HepG2 (cell line): ENCODE measurements at regions of chr1 and their contacts with region 1.

Region 1: GRCh38 chr1:245894843-245895242 is 612.2 kb downstream of the SMYD3 start:
- DNase-seq: no peak
- ATAC-seq: no peak
- H3K4me3 ChIP-seq: no peak overlapping the region
- H3K27ac ChIP-seq: no peak overlapping the region
- H3K4me1 ChIP-seq: no peaks in the 10 kb centered on the region
- H3K27me3 ChIP-seq: no peaks in the 10 kb centered on the region
- CTCF ChIP-seq: no peak
- EP300 ChIP-seq: no peak
- POLR2A ChIP-seq: no peak
- RAD21 ChIP-seq: no peak

Region 2: DNA sequence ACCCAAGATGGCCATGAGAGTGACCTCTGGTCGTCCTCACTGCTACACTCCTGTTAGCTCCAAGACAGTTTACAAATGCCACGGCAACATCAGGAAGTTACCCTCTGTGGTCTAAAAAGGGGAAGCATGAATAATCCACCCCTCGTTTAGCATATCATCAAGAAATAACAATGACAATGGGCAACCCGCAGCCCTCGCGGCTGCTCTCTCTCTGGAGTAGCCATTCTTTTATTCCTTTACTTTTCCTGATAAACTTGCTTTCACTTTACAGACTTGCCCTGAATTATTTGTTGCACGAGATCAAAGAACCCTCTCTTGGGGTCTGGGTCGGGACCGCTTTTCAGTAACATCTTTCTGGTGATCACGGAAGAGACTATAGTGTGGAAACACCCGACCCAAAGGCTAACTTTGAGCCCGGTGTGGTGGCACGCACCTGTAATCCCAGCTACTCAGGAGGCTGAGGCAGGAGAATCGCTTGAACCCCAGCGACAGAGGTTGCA is 1079.2 kb before region 1 on chr1:
- CTCF ChIA-PET with region 1: no interaction called
- POLR2A ChIA-PET with region 1: no interaction called
- in situ Hi-C with region 1: no loop called
- intact Hi-C with region 1: no loop called
- DNase-seq: no peak
- ATAC-seq: no peak
- H3K4me3 ChIP-seq: no peak overlapping the region
- H3K27ac ChIP-seq: no peak overlapping the region
- H3K4me1 ChIP-seq: peaks cover 23% of the 10 kb centered on the region
- H3K27me3 ChIP-seq: no peaks in the 10 kb centered on the region
- CTCF ChIP-seq: no peak
- EP300 ChIP-seq: no peak
- POLR2A ChIP-seq: no peak
- RAD21 ChIP-seq: no peak

Region 3: GRCh38 chr1:245687594-245688535 is 207.0 kb before region 1 on chr1:
- CTCF ChIA-PET with region 1: no interaction called
- POLR2A ChIA-PET with region 1: no interaction called
- in situ Hi-C with region 1: no loop called
- intact Hi-C with region 1: no loop called
- DNase-seq: no peak
- ATAC-seq: peak; percentile 32; the same call in 2 of the 3 replicates
- H3K4me3 ChIP-seq: no peak overlapping the region
- H3K27ac ChIP-seq: no peak overlapping the region
- H3K4me1 ChIP-seq: no peaks in the 10 kb centered on the region
- H3K27me3 ChIP-seq: no peaks in the 10 kb centered on the region
- CTCF ChIP-seq: peak; percentile 39; the same call in 1 of the 2 replicates
- EP300 ChIP-seq: no peak
- POLR2A ChIP-seq: no peak
- RAD21 ChIP-seq: no peak

Region 4: GRCh38 chr1:245807306-245807705 is 87.5 kb before region 1 on chr1:
- CTCF ChIA-PET with region 1: no interaction called
- POLR2A ChIA-PET with region 1: no interaction called
- in situ Hi-C with region 1: no loop called
- intact Hi-C with region 1: no loop called
- DNase-seq: no peak
- ATAC-seq: no peak
- H3K4me3 ChIP-seq: no peak overlapping the region
- H3K27ac ChIP-seq: peak overlapping the region; percentile 12
- H3K4me1 ChIP-seq: peaks cover 62% of the 10 kb centered on the region
- H3K27me3 ChIP-seq: no peaks in the 10 kb centered on the region
- CTCF ChIP-seq: no peak
- EP300 ChIP-seq: no peak
- POLR2A ChIP-seq: no peak
- RAD21 ChIP-seq: no peak

Region 5: DNA sequence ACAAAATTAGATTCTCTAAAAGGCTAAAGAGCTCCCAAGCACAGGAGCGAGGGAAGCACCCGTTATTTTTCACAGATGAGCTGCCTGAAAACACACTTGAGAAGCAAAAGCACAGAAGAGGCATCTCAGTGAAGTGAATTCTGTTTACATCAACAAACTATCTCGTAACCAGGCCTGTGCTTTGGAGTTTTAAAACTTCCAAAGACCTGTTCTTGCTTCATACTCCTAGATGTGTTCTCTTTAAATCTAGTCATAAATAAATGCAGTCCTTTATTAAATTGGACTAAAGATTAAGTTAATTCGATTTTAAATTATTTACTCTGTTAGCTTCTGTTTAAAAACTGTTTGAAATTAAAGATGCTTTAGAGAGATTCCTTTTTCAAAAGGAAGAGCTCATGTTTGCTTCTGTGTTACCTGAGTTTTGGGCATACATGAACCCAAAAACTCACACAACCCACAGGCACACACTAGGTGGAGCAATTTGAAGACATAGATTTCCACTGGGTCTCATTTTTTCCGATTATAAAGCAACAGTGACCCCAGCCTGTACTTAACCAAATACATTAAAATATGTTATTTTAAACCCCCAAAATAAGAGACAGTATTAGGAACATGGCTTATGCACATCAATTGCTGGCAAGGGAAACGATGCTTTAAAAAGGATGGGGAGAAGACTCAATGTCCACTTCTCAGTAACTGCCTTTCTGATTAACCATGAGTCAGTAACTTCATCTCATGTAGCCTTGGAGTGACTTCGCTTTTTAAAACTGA is 35.9 kb before region 1 on chr1:
- CTCF ChIA-PET with region 1: no interaction called
- POLR2A ChIA-PET with region 1: no interaction called
- in situ Hi-C with region 1: no loop called
- intact Hi-C with region 1: no loop called
- DNase-seq: no peak
- ATAC-seq: no peak
- H3K4me3 ChIP-seq: no peak overlapping the region
- H3K27ac ChIP-seq: no peak overlapping the region
- H3K4me1 ChIP-seq: peaks cover 49% of the 10 kb centered on the region
- H3K27me3 ChIP-seq: no peaks in the 10 kb centered on the region
- CTCF ChIP-seq: no peak
- EP300 ChIP-seq: no peak
- POLR2A ChIP-seq: no peak
- RAD21 ChIP-seq: no peak

Region 6: GRCh38 chr1:245953876-245954660 is 59.2 kb after region 1 on chr1:
- CTCF ChIA-PET with region 1: no interaction called
- POLR2A ChIA-PET with region 1: no interaction called
- in situ Hi-C with region 1: no loop called
- intact Hi-C with region 1: loop called (anchors 10 kb)
- DNase-seq: no peak
- ATAC-seq: no peak
- H3K4me3 ChIP-seq: no peak overlapping the region
- H3K27ac ChIP-seq: no peak overlapping the region
- H3K4me1 ChIP-seq: no peaks in the 10 kb centered on the region
- H3K27me3 ChIP-seq: no peaks in the 10 kb centered on the region
- CTCF ChIP-seq: no peak
- EP300 ChIP-seq: no peak
- POLR2A ChIP-seq: no peak
- RAD21 ChIP-seq: no peak